Left ventricle myocardium superior (tissue), 1 donor: ENCODE measurements at regions of chr2 and their contacts with region 1.

Region 1: DNA sequence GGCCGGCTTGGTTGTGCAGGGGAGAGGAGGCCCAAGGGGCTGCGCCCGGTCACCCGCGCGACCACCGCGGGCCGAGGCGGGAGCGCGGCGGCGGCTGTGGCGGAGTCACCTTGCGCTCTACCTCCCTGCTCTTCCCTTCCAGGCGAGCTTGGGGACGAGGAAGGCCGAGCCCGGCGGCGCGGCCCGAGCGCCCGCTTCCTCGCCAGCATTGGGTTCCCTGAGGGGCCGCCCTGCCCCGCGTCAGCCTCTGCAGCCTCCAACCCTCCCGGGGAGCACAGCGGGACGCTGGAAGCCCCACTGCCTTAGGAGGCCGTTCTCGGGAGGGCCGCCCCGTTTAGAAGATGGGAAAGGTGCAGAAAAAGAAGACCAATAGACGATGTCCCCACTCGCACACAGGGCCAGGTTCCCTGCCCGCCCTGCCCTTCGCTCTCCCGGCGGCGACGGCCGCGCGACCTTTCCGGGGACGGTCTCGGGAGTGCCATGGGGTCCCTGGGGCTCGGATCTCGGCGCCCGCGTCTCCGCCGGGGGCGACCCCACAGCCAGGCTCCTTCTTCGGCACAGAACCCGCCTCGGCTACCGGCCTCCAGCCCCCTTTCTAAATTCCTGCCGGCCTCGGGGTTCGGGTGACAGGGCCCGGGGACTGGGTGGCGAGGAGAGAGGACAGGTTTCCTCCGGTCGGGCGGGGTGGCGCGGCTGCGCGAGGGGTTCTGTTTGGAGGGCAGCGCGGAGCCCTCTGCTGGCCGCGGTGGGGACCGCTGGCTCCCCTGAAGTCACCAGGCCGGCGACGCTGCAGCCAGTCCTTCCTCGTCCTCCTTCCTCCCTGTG is 85.5 kb downstream of the HS6ST1 start:
- DNase-seq: peak; percentile 95
- ATAC-seq: peak; percentile 98

Region 2: DNA sequence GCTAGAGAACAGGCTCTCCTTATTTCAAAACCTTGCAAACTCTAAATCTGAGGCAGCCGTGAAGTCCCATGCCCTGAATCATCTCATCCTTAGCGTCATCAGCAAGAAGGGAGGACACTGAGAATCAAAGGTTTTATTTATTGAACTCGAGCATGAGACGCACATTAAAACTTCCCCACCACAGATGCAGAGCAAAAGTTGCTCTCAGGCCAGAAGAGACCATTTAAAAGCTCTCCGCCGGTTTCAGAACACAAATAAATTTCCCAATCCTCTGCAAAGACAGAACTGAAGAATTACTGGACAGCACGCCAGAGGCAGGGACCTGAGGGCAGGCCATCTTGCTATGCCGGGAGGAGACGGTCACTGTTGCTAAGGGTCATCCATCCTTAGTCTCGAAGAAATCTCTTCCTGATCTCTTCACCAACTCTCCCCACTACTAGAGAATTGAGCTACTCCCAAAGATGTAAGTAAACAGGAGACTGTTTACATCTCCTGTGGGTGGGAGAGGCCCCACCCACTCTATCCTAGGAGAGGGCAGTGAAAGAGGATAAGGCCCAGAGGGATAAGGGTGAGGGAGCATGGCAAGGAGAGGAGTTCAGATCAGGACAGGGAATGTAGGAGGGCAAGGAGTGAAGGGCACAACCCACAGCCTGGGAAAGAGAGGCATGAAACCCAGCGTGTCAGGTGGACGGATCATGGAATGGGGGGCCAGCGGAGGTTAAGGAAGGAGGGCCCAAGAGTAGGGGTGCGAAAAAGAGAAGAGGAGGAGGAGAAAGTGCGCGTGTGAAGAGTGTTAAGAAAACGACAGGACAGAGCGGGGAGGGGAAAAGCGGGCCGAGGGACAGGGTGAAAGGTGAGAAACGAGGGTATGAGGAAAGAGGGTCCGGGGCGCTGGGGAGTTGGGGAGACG is 348.5 kb before region 1 on chr2:
- intact Hi-C with region 1: loop called (anchors 10 kb)
- DNase-seq: no peak
- ATAC-seq: no peak

Region 3: DNA sequence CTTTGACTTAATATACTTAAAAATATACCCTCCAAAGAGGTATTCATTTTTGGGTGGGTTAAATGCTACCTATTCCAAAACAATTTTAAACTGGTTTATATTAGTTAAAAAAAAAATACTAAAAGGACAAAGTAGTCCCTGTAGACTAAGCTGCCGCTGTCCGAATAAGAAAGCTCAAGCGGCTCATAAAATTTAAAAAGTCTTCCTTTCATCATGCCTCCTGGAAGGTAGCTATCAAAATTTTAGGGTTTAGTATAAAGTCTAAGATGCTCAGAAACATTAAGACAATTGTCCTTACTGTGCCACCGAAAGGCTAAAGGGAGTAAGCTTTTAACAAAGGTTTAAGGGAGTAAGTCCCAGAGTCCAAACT is 142.6 kb before region 1 on chr2:
- intact Hi-C with region 1: no loop called
- DNase-seq: no peak
- ATAC-seq: no peak

Region 4: GRCh38 chr2:128178650-128179460 is 54.3 kb before region 1 on chr2:
- intact Hi-C with region 1: no loop called
- DNase-seq: peak; percentile 59
- ATAC-seq: peak; percentile 97